Transverse colon (tissue), 4 donors: ENCODE measurements at regions of chr18 and their contacts with region 1.

Region 1: GRCh38 chr18:41096504-41096903 is 858.5 kb upstream of the PIK3C3 start:
- DNase-seq: no peak
- H3K4me3 ChIP-seq: no peak overlapping the region
- H3K27ac ChIP-seq: no peak overlapping the region
- H3K4me1 ChIP-seq: no peaks in the 10 kb centered on the region
- H3K27me3 ChIP-seq: no peaks in the 10 kb centered on the region
- CTCF ChIP-seq: no peak
- EP300 ChIP-seq: no peak
- POLR2A ChIP-seq: no peak

Region 2: GRCh38 chr18:41197967-41198366 is 101.5 kb after region 1 on chr18:
- in situ Hi-C with region 1: loop called in 1 of 4 experiments (anchors 25 kb)
- intact Hi-C with region 1: no loop called
- DNase-seq: no peak
- H3K4me3 ChIP-seq: no peak overlapping the region
- H3K27ac ChIP-seq: no peak overlapping the region
- H3K4me1 ChIP-seq: no peaks in the 10 kb centered on the region
- H3K27me3 ChIP-seq: no peaks in the 10 kb centered on the region
- CTCF ChIP-seq: no peak
- EP300 ChIP-seq: no peak
- POLR2A ChIP-seq: no peak